WTC11 (cell line): ENCODE measurements at regions of chr1 and their contacts with region 1.

Region 1: DNA sequence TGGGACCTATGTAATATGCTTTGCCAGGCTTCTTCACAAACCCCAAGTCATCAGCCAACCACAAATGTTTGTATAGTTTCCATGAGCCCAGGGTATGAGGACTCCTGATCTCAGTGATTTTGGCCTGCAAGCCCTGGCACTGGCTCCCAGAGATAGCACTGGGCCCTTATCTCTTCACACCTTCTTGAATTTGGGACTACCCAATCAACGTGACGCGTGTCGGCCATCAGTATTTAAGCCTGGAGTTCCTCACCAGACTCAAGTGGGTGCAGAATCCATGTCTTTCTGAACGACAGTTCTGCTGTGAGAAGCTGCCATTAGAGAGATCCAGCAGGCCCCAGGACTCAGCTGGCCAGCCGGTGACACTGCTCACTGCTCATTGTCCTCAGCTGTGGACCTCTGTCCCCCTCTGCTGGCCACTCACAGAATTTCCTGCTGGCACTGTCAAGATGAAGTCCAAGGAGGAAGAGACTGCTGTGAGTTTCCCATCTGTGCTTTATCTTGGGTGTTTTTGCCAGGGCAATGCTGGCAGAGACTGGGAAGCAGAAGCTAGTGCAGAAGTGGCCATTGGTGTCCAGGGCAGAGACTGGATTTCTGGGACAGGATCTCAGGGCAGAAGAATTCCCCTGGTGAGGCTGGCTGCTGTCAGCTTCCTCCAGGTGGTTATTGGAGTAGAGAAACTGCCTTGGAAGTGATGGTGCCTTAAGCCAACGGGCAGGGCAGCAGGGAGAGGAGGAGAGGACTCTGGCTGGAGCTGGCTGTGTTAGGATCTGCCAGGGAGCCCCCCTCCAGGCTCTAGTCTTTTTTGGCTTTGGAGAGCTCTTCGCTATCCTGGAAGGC is 28.4 kb downstream of the TMCC2 start:
- DNase-seq: peak; percentile 93
- ATAC-seq: peak; percentile 90
- H3K4me3 Mint-ChIP-seq: no peak overlapping the region
- H3K27ac Mint-ChIP-seq: 0 out of 2 replicates have a peak overlapping the region, but pooled peaks have one; percentile 83
- H3K4me1 Mint-ChIP-seq: peaks cover 17% of the 10 kb centered on the region
- H3K27me3 Mint-ChIP-seq: no peaks in the 10 kb centered on the region
- CTCF ChIP-seq: peak; percentile 98

Region 2: DNA sequence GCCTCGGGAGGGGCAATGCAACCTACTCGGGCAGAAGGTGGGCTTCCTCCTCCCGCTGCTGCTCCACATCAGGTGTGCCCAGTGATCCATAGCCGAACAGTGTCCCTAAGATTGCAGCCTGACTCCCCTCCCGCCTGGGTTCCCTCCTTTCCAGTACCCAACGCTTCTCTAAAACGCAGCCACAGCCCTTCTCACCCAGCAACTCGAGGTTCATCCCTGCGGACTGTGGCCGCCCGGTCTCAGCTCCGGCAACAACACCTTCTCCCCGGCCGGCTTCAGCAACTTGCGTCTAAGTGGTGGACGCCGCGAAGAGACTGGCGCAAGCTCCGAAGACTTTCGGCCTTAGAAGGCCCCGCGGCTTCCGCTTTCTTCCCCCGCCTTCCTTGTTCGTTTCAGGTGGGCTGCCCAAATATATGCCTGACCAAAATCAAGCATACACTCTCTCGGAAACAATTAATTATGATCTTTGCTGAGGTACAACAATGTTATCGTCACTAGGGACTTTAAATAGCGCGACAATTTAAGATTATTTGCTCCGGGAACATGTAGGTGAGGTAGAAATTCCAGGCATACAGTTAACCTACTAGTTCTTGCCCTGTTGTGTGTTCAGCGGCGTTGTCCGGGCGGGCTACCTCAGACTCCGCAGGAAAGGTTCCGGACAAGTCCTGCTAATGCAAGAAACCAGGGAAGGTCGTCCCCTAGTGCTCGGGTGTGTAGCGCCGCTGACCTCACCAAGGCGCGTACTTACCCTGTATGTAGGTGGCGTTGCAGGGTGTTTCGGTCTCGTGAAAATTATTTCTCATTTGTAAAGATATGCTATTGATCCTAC is 134.3 kb before region 1 on chr1 and contains the start of gene RBBP5:
- CTCF ChIA-PET with region 1: interaction called, 10 read pairs
- POLR2A ChIA-PET with region 1: no interaction called
- DNase-seq: peak; percentile 96
- ATAC-seq: peak; percentile 100
- H3K4me3 Mint-ChIP-seq: peak within 1 kb of the TSS; percentile 98
- H3K27ac Mint-ChIP-seq: peak within 1 kb of the TSS; percentile 100
- H3K4me1 Mint-ChIP-seq: peaks cover 18% of the 10 kb centered on the region
- H3K27me3 Mint-ChIP-seq: no peaks in the 10 kb centered on the region; the same call in 1 of the 2 replicates
- CTCF ChIP-seq: no peak
- total RNA-seq, gene RBBP5: 18.5 to 23.8 TPM (median 20.1 TPM) in 3 replicates

Region 3: DNA sequence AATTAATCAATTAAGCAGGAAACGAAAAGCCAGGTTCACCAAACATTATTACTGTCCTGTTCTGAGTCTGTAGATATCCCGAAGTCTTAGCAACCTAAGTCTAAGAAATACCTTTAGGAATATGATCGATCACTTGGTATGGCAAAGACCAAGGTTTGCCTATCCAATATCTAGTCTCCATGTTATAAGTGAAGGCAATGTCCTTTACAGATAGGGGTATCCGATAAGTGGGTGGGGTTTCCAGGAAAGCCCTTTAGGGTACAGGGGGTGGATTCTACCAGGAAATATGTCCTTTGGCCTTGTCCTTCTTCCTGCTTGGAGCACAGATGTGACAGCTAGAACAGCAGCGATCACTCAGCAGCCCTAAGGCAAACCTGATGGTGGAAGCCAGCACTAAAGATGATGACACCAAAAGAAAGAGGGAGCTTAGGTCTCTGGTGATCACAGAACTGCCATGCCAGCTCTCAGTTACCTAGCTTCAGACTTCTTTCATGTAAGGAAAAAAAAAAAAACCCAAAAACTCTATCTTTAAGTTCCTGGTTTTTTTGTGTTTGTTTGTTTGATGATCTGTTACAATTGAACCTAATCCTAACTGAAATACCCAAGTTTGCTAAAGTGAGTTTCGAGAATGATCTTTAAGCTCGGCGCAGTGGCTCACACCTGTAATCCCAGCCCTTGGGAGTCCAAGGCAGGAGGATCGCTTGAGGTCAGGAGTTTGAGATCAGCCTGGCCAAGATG is 85.5 kb before region 1 on chr1:
- CTCF ChIA-PET with region 1: no interaction called
- POLR2A ChIA-PET with region 1: no interaction called
- DNase-seq: no peak
- ATAC-seq: no peak
- H3K4me3 Mint-ChIP-seq: no peak overlapping the region
- H3K27ac Mint-ChIP-seq: no peak overlapping the region
- H3K4me1 Mint-ChIP-seq: no peaks in the 10 kb centered on the region
- H3K27me3 Mint-ChIP-seq: no peaks in the 10 kb centered on the region
- CTCF ChIP-seq: no peak